GM10248 (cell line): ENCODE measurements at regions of chr10 and their contacts with region 1.

Region 1: GRCh38 chr10:95841661-95842498 is 65.9 kb upstream of the CC2D2B start:
- DNase-seq: peak; percentile 38
- CTCF ChIP-seq: peak; percentile 68

Region 2: DNA sequence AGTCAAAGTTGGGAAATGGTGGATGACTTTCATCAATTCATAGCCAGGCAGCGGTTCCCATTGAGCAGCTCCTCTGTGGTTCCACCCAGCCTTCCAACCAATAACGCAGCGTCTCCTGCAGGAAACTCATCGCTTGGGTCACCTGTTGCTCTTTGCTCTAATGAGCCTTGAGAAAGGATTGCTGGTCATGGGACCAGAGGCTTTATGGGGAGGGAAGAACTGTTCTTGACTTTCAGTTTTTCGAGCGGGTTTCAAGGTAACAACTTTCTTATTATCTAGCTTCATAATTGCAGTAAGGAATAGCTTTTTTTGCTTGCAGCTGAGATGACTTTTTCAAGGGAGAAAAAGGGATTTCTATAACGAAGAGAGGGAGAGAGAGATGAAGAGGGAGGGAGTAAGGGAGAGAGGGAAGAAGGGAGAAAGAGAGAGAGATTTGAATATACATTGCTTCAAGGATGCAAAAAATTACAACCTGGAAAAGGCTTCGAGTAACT is 86.3 kb before region 1 on chr10:
- CTCF ChIA-PET with region 1: interaction called, 30 read pairs
- POLR2A ChIA-PET with region 1: interaction called, 4 read pairs
- DNase-seq: peak; percentile 66
- CTCF ChIP-seq: no peak

Region 3: DNA sequence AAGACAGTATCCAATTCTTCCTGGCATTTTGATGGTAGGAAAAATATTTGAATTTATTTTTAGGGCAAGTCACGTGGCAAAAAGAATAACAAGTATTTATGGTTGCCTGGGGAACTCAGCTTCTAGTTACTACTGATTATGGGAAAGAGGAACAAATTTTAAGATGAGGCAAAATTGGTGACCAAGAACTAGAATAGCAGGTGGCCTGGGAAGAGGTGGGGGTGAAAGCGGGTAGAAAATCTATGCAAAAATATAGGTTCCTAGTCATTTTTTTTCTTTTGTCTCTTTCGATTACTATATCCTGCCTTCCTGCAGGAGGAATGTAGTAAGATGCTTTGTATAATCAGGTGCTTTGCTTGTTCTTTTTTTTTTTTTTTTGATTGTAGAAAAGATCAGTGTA is 58.1 kb before region 1 on chr10:
- CTCF ChIA-PET with region 1: interaction called, 23 read pairs
- POLR2A ChIA-PET with region 1: interaction called, 6 read pairs
- DNase-seq: peak; percentile 26
- CTCF ChIP-seq: no peak

Region 4: DNA sequence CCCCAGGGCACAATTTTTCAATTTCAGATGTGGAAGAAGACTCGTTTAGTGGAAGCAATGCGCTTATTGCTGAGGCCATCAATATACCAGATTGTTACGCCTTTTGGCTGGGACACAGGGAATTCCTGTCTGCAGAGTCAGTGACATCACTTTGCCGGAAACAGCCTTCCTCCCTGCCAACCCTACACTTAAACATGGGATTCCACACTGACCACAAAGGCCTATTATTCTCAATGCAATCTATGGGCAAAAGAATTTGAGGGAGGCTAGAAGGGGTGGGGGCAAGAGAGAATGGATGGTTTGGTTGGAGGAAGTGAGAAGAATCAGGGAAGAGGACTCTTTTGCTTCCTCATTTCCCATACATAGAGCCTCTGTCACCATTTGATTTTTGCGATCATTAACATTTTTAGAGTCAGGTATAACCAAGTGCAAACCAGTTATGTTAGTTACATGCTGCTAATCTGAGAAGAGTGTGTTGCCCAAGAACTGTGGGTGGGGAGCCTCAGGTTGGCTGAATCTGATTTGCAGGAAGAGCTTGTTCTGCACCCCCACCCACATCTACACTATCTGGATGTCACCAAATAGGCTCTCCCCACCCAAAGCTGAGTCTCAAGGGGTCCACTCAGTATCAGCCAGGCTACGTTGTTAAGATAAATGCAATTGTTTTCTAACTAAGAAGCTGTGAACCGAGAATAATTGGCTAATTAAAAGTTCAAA is 27.7 kb before region 1 on chr10:
- CTCF ChIA-PET with region 1: interaction called, 23 read pairs
- POLR2A ChIA-PET with region 1: no interaction called
- DNase-seq: no peak
- CTCF ChIP-seq: no peak

Region 5: DNA sequence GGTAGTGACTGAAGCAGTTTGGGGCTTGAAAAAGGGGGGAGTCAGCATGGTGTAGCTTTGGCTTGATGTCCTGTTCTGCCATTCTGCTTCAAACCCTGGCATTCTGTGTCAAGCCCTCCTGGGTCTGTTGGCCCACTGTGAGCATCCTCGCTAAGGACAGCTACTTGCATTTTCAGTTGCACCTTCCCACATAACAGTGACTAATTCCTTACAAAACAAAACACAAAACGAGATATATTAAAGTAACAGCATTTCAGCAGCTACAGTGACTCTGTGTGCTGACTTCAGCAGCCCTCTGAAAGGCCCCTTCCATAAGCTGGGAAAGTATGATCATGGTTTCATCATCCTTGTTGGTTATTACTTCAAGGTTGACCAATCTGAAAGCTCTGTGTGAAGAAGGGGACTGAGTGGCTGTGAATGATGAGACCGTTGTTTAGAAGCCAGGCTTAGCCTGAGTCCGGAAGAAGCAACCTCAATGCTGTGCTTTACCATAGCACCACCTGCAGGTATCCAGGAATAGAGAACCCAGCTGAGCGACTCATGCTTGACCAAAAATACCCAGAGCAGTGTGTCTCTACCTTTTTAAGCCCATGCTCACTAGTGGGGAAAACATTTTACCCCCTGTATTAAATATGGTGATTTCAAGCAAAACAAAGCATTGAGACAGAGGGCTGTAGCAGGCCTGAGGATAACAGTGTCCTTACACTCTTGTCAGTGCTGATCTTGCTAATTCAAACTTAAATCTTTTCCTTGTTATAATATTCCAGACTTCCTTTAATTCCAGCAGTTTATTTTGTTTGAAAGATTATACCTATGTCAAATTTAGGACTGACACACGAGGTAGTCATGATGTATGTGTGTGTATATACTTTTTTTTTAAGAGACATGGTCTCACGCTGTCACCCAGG is 23.3 kb after region 1 on chr10:
- CTCF ChIA-PET with region 1: interaction called, 25 read pairs
- POLR2A ChIA-PET with region 1: no interaction called
- DNase-seq: peak; percentile 65
- CTCF ChIP-seq: peak; percentile 52

Region 6: DNA sequence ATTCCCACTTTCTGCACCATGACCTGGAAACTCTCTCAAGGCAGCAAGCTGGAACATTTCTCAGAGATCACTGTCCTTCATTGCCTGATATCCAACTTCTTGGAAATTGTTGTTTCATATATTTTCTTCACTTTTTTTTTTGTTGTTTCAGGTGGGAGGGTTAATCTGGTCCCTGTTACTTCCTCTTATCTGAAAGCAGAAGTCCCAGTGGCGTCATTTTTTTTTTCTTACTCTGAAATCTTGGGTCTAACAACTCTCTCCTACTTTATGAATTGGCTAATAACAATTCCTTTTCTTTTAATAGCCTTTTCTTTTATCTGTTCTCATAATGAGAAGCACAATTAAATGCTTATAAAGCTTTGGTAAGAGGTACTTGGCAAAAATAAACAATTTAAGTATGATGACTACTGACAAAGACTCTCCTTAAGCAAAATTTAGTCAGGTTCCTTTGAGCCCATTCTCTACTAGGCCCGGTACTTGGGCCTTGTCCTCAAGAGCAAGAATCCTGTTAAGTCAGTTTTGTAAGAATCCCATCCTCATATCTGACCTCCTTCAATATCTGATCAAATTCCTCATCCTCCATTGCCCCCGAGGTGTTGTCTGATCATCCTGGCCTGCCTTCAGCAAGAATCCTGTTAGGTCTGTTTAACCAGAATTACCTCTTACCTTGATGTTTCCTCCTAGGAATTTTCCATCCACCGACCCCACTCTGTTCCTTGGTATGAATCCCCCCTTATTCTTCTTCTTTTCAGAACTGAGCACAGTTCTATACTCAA is 54.4 kb after region 1 on chr10:
- CTCF ChIA-PET with region 1: no interaction called
- POLR2A ChIA-PET with region 1: no interaction called
- DNase-seq: no peak
- CTCF ChIP-seq: no peak

Region 7: GRCh38 chr10:95988702-95989101 is 146.8 kb after region 1 on chr10:
- CTCF ChIA-PET with region 1: no interaction called
- POLR2A ChIA-PET with region 1: no interaction called
- DNase-seq: no peak
- CTCF ChIP-seq: peak; percentile 42

Region 8: GRCh38 chr10:96208271-96208670 is 366.4 kb after region 1 on chr10:
- CTCF ChIA-PET with region 1: no interaction called
- POLR2A ChIA-PET with region 1: no interaction called
- DNase-seq: peak; percentile 45
- CTCF ChIP-seq: no peak

Region 9: GRCh38 chr10:96863922-96864543 is 1022.2 kb after region 1 on chr10:
- CTCF ChIA-PET with region 1: no interaction called
- POLR2A ChIA-PET with region 1: no interaction called
- DNase-seq: peak; percentile 53
- CTCF ChIP-seq: no peak